ENCODE measurements at regions of chr5 and their contacts with region 1.

Region 1: DNA sequence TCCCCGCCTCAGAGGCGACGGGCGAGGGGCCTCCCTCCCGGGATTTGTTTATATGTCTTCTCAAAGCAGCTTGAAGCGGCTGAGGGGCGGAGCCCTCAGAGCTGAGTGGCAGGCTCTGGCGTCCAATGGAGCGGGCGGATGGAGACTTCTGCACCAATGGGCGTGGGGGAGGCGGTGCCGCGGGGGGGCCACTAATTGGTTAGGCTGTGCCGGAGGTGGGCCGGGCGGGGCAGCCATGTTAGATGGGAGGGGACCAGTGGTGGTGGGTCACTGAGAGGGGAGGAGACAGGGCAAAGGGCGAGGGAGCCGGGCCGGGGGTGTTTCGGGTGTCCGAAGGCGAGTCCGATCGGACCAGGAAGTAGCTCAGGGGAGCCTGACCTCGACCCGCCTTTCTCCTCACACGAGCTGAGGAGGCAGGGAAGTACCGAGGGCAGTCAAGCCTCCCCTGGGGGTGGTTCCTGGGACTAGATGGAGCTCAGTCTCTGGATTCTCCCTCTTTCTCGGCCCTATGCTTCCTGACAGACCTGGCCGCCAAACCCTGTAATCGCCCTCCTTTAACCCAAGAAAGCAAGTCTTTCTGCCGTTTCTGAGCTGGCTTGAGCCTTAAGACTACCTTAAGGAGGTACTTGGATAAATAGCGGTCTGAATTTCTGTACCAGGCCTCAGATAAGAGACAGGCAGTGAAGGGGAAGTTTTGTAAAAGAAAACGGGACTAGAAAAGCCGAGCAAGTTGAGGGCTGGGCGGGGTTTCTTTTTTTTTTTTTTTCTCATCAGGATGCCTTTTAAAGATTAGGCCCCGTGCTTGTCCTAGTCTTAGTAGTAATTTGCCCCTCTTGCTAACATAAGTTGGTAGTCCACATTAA is 1.1 kb downstream of the CREBRF start:
- DNase-seq: peak; percentile 94 to 100
- H3K4me3 ChIP-seq: peak overlapping the region; percentile 61
- H3K27ac ChIP-seq: peak overlapping the region; percentile 80
- H3K4me1 ChIP-seq: peaks cover 15% of the 10 kb centered on the region; the same call in 1 of the 2 replicates
- H3K27me3 ChIP-seq: no peaks in the 10 kb centered on the region
- CTCF ChIP-seq: no peak

Region 2: DNA sequence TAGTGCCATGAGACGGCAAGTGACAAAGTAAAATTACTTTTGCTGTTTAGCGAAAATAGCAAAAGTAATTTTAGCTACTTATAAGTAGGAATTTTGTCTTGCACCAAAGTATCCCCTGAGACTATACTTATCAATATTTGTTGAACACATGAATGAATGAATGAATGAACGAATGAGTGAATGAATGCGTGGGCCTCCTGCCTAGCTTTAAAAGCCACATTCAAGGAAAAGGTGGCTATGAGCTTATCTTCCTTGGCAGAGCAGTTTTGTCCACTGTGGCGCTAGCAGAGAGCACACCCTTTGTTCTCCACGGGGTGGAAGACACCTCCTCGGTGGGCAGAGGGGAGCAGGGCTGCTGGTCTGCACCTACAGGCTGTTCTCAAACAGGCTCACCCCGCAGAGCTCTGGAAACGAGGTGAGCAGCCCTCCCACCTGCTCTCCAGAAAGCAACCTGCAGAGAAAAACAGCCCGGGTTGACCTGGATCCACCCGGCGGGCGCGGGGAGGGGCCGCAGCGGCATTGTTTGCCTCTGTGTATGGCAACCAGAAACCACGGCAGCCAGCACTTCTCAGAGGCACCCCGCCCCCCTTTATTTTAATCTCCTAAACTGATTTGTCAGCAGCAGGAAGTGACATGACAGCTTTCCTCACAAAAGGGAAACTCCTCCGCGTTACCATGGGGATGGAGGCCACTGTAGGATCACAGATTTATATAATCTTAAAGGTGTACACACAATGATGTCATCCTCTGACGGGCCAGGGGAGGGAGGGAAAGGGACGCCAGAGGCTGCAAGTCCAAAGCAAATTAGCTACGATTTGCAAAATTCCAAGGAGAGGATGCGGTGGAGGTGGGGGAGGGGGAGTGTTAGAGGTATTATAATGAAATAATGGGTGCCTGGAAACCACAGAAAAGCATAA is 292.2 kb before region 1 on chr5:
- CTCF ChIA-PET with region 1: no interaction called
- POLR2A ChIA-PET with region 1: no interaction called
- intact Hi-C with region 1: loop called (anchors 10 kb)
- DNase-seq: peak; percentile 97 to 99
- H3K4me3 ChIP-seq: peak overlapping the region; percentile 52; the same call in 1 of the 2 replicates
- H3K27ac ChIP-seq: peak overlapping the region; percentile 59
- H3K4me1 ChIP-seq: peaks cover 31% of the 10 kb centered on the region
- H3K27me3 ChIP-seq: no peaks in the 10 kb centered on the region
- CTCF ChIP-seq: no peak

Region 3: DNA sequence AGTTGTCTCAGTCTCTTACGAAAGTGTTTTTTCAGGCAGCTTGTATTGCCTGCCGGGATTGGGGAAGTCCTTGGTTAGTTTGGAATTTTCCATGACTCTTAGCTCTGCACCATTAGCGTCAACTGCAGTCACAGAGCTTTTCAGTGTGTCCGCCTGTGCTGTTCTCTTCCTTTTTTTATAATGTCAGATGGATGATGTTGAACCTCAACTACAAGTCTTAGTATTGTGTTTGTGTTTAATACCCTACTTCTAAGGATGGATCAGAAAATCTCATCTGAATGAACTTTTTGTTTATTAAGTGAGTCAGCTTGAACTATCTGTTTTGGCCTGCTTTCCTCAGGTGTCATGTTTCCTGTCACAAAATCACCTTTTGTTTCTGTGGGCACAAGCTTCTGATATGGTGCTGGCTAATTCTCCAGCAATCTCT is 40.7 kb before region 1 on chr5:
- CTCF ChIA-PET with region 1: interaction called, 3 read pairs
- POLR2A ChIA-PET with region 1: interaction called, 7 read pairs
- intact Hi-C with region 1: loop called (anchors 5 kb)
- DNase-seq: peak; percentile 34 to 84
- H3K4me3 ChIP-seq: peak overlapping the region; percentile 16; the same call in 1 of the 2 replicates
- H3K27ac ChIP-seq: peak overlapping the region; percentile 74
- H3K4me1 ChIP-seq: peaks cover 34% of the 10 kb centered on the region
- H3K27me3 ChIP-seq: no peaks in the 10 kb centered on the region
- CTCF ChIP-seq: no peak

Region 4: DNA sequence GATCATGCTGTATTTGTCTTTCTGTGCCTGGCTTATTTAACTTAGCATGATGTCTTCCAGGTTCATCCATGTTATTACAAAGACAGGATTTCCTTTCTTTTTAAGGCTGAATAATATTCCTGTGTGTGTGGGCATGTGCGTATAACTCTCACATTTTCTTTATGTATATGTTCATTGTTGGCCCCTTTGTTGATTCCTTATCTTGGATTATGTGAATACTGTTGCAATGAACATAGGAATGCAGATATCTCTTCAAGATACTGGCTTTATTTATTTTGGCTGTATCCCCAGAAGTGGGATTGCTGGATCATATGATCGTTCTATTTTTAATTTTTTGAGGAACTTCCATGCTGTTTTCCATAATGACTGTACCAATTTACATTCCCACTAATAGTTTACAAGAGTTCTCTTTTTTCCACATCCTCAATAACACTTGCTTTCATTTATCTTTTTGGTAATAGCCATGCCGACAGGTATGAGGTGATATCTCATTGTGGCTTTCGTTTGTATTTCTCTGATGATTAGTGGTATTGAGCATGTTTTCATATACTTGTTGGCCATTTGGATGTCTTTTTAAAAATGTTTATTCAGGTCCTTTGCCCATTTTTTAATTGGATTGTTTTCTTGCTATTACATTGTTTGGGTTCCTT is 36.8 kb after region 1 on chr5:
- CTCF ChIA-PET with region 1: no interaction called
- POLR2A ChIA-PET with region 1: no interaction called
- intact Hi-C with region 1: loop called (anchors 5 kb)
- DNase-seq: peak in 1 of 2 experiments; percentile 76
- H3K4me3 ChIP-seq: no peak overlapping the region
- H3K27ac ChIP-seq: no peak overlapping the region
- H3K4me1 ChIP-seq: peaks cover 15% of the 10 kb centered on the region
- H3K27me3 ChIP-seq: no peaks in the 10 kb centered on the region
- CTCF ChIP-seq: no peak

Region 5: GRCh38 chr5:173204185-173204979 is 147.1 kb after region 1 on chr5:
- CTCF ChIA-PET with region 1: no interaction called
- POLR2A ChIA-PET with region 1: no interaction called
- intact Hi-C with region 1: loop called (anchors 1 kb)
- DNase-seq: peak in 1 of 2 experiments; percentile 14
- H3K4me3 ChIP-seq: no peak overlapping the region
- H3K27ac ChIP-seq: no peak overlapping the region
- H3K4me1 ChIP-seq: peaks cover 18% of the 10 kb centered on the region
- H3K27me3 ChIP-seq: peaks cover 28% of the 10 kb centered on the region; the same call in 1 of the 2 replicates
- CTCF ChIP-seq: peak; percentile 75